Naive thymus-derived CD4-positive, alpha-beta T cell (primary cell): ENCODE measurements at regions of chr12 and their contacts with region 1.

Region 1: DNA sequence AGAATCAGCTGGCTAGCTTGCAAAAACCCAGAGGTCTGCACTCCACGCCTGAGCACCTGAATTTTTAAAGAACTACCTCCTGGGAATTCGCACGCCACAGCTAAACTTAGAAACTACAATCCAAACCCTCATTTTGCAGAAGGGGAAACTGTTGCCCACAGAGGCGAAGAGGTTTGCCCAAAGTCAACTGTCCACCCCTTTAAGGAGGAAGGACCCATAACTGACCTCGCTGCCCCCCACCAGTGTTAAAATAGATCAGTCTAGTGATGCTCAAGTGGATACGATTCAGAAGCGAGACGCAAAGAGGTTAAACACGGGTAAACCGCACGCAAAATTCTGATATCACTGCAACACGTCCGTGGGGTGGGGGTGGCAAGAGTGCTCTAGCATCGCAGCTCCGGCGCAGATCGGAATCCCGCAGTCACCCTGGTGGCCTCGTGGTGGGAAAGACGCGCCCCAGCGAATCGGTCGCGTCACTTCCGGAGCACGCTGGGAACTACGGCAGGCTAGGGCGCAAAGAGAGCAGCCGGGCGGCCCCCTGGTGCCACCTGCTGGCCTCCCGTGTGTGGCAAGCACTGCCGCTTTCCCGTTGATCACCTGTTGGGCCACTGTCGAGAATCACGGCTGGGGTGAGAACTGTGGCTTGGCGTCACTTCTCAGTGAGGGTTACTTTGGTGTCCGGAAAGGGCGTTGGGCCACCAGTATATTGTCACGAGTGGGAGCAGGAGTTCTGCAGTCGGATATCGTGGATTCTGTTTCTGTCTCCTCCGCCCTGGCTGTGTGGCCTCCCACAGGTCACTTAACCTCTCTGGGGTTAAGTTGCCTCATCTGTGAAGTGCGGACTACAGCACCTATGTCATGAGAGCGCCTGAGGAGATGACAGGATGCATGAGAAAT is at the start of gene ALKBH2:
- DNase-seq: peak; percentile 91 to 96 (median 93)
- ATAC-seq: peak; percentile 87
- H3K4me3 ChIP-seq: peak within 1 kb of the TSS; percentile 62
- H3K4me3 Mint-ChIP-seq: peak within 1 kb of the TSS; percentile 80 to 93 (median 90)
- H3K27ac ChIP-seq: peak within 1 kb of the TSS; percentile 76
- H3K27ac Mint-ChIP-seq: peak within 1 kb of the TSS; percentile 88 to 96 (median 93)
- H3K4me1 ChIP-seq: peaks cover 18% of the 10 kb centered on the region in 2 donors
- H3K4me1 Mint-ChIP-seq: peaks cover 23 to 43% (median 36%) of the 10 kb centered on the region in 7 donors
- H3K27me3 ChIP-seq: no peaks in the 10 kb centered on the region
- H3K27me3 Mint-ChIP-seq: no peaks in the 10 kb centered on the region
- total RNA-seq, gene ALKBH2: 13.2 to 21.4 (median 17.6) TPM

Region 2: DNA sequence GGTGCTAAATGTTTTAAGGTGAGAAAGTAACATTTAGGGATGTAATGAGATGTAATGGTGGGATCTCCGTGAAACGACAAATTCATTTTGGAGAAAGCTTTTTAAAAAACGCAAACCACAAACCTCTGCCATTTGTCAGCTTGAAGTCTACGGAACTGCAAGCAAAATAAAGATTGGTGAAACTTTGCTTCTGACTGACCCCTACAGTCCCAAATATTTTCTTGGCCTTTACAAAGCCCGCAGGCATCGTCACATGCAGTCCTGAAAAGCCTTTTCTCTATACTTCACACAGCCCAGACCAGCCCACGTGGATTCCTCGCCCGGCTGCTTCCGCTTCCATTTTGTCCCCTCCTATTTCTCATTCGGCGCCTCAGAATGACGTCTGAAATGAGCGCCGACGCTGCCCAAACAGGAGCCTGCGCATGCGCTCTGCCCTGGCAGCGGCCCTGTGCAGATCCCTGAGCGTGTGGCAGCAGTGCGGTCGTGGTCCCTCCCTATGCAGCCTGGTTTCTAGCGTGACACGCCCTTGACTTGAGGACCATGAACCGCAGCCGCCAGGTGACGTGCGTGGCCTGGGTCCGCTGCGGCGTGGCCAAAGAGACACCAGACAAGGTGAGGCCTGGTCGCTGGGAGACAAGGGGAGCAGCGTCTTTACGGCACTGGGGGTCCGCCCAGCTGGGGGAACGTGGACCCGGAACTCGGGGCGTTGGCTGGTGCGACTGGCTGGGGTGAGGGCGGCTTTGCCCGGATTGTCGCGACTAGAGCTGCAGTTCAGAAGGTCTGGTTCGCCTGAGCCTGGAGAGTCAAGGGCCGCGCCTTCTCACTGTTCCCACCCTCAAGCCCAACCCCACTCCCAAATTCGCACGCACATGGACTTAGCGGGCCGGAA is 1407.7 kb before region 1 on chr12 and contains the start of gene PWP1:
- CTCF ChIA-PET with region 1: no interaction called
- POLR2A ChIA-PET with region 1: no interaction called
- intact Hi-C with region 1: loop called in 1 of 2 experiments (anchors 1 kb)
- DNase-seq: peak; percentile 93 to 97 (median 95)
- ATAC-seq: peak; percentile 93
- H3K4me3 ChIP-seq: peak within 1 kb of the TSS; percentile 78
- H3K4me3 Mint-ChIP-seq: peak within 1 kb of the TSS; percentile 90 to 99 (median 95)
- H3K27ac ChIP-seq: peak within 1 kb of the TSS; percentile 88
- H3K27ac Mint-ChIP-seq: peak within 1 kb of the TSS; percentile 90 to 99 (median 97)
- H3K4me1 ChIP-seq: peaks cover 12 to 19% of the 10 kb centered on the region in 2 donors
- H3K4me1 Mint-ChIP-seq: peaks cover 23 to 40% (median 35%) of the 10 kb centered on the region in 7 donors
- H3K27me3 ChIP-seq: no peaks in the 10 kb centered on the region
- H3K27me3 Mint-ChIP-seq: peaks cover 0 to 3% (median 0%) of the 10 kb centered on the region in 5 donors
- total RNA-seq, gene PWP1: 20.9 to 42.5 (median 25.7) TPM

Region 3: DNA sequence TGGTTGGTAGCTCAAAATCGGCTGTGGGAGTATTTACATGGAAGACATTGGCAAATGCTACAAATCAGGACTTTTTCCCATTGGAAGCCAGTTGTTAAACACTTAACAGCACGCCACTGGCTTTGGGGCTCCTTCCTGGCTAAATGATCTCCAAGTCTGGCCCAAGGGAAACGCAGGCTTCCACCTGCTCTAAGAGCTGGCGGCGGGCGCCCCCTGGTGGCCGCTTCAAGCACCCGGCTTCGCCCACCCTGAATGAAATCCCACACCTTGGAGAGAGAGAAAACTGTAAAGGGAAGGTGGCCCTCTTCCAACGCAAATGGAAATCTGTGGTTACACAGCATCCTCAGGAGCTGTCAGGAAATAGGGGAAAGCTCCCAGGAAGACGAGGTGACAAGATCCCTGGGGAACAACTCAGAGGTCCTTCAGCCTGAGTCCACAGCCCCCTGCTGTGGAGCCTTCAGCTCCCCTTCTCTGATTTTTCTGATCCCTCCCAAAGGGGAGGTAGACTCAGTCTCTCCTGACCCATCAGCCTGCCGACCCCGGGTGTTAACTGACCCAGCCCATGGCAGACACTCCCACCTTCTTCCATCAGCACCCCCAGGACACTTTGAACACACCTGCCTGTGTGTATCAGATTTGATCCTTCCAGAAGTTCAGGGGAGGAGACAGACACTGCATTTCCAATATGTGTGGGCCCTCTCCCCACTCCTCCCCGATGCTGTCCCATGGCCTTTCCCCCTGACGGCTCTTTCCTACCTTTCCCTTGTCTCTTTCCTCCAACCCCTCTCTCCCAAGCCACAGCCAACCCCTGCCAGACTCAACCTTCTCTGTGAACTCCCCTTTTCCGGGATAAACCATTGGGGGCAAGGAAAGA is 475.0 kb before region 1 on chr12:
- CTCF ChIA-PET with region 1: no interaction called
- POLR2A ChIA-PET with region 1: no interaction called
- intact Hi-C with region 1: loop called in 1 of 2 experiments (anchors 5 kb)
- DNase-seq: peak; percentile 61 to 81 (median 74)
- ATAC-seq: peak; percentile 72
- H3K4me3 ChIP-seq: no peak overlapping the region
- H3K4me3 Mint-ChIP-seq: peak overlapping the region in 8 of 10 donors; percentile 13 to 54 (median 34)
- H3K27ac ChIP-seq: peak overlapping the region; percentile 65
- H3K27ac Mint-ChIP-seq: peak overlapping the region; percentile 67 to 92 (median 79)
- H3K4me1 ChIP-seq: peaks cover 34 to 42% of the 10 kb centered on the region in 2 donors
- H3K4me1 Mint-ChIP-seq: peaks cover 44 to 72% (median 64%) of the 10 kb centered on the region in 7 donors
- H3K27me3 ChIP-seq: no peaks in the 10 kb centered on the region
- H3K27me3 Mint-ChIP-seq: no peaks in the 10 kb centered on the region

Region 4: GRCh38 chr12:108731105-108731865 is 362.0 kb before region 1 on chr12 and contains the start of gene CORO1C:
- CTCF ChIA-PET with region 1: no interaction called
- POLR2A ChIA-PET with region 1: no interaction called
- intact Hi-C with region 1: loop called (anchors 2 to 5 kb)
- DNase-seq: peak; percentile 90 to 99 (median 94)
- ATAC-seq: peak; percentile 88
- H3K4me3 ChIP-seq: peak within 1 kb of the TSS; percentile 99
- H3K4me3 Mint-ChIP-seq: peak within 1 kb of the TSS; percentile 94 to 99 (median 96)
- H3K27ac ChIP-seq: peak within 1 kb of the TSS; percentile 78
- H3K27ac Mint-ChIP-seq: peak within 1 kb of the TSS; percentile 79 to 98 (median 96)
- H3K4me1 ChIP-seq: peaks cover 4 to 6% of the 10 kb centered on the region in 2 donors
- H3K4me1 Mint-ChIP-seq: peaks cover 0 to 44% (median 19%) of the 10 kb centered on the region in 7 donors
- H3K27me3 ChIP-seq: no peaks in the 10 kb centered on the region
- H3K27me3 Mint-ChIP-seq: peaks cover 0 to 9% (median 0%) of the 10 kb centered on the region in 5 donors
- total RNA-seq, gene CORO1C: 7.6 to 71.8 (median 15.7) TPM

Region 5: DNA sequence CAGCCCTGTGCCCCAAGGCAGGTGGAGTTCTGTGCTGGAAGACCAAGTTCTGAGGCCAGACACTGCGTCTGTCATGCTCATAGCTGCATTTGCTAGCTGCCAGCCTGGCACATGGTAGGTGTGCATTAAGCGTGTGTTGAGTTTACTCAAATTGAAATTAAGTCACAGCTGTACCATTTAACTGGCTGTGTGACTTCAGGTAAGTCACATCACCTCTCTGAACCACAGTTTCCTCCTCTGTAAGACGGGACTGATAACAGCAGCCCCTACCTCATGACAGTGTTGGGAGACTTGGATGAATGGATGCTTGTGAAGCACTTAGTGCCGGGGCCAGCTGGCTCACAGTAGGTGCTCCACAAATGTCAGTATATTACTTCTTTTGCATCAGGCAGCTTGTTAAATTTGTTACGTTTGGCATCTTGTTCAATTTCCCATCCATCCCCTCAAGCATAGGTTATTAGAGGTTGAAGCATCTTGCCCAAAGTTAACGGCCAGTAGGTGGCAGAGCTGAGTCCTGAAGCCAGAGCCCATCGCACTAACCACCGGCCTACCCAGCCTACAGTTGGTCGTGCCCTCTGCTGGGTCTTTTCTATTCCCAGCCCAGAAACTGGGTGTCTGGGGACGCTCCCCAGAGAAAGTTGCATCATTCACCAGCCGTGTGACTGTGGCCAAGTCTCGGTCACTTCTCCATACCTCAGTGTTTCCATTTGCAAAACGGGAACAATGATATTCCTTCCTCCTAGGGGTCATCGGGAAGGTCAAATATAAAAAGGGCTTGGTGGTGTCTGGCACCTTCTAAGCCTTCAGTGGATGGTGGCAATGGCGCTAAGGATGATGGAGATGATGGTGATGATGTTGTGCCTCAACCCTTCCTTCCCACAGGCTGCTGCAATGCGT is 208.9 kb before region 1 on chr12:
- CTCF ChIA-PET with region 1: interaction called, 10 read pairs
- POLR2A ChIA-PET with region 1: no interaction called
- intact Hi-C with region 1: loop called (anchors 1 kb)
- DNase-seq: peak; percentile 15 to 55 (median 33)
- ATAC-seq: peak; percentile 93
- H3K4me3 ChIP-seq: no peak overlapping the region
- H3K4me3 Mint-ChIP-seq: no peak overlapping the region
- H3K27ac ChIP-seq: no peak overlapping the region
- H3K27ac Mint-ChIP-seq: no peak overlapping the region
- H3K4me1 ChIP-seq: no peaks in the 10 kb centered on the region
- H3K4me1 Mint-ChIP-seq: peaks cover 0 to 6% (median 0%) of the 10 kb centered on the region in 7 donors
- H3K27me3 ChIP-seq: no peaks in the 10 kb centered on the region
- H3K27me3 Mint-ChIP-seq: no peaks in the 10 kb centered on the region

Region 6: DNA sequence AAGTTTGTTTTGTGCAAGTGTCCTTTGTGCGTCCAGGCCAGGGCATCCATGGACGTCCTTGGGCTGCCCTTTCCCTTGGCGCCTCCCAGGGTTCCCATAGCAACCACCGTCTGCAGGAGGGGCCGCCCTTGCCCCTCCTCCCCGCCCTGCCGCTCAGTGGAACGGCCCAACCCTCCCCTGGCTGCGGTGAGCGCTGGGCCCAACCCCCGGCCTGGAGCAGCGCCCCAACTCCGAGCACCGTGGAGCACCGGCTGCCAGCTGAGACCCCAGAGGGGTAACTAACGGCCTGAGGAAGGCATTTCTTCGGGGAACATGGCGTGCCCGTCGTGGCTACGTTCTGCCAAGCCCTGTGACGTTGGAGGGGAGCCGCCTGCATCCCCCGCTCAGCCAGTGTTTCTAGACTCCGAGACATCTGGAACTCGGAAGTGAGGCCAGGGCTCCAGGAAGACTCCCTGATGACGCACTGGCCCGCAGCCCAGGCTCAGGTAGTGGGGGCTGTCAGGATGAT is 17.8 kb after region 1 on chr12:
- CTCF ChIA-PET with region 1: interaction called, 5 read pairs
- POLR2A ChIA-PET with region 1: interaction called, 8 read pairs
- intact Hi-C with region 1: loop called (anchors 1 kb)
- DNase-seq: peak; percentile 24 to 62 (median 48)
- ATAC-seq: peak; percentile 89
- H3K4me3 ChIP-seq: peak overlapping the region; percentile 46
- H3K4me3 Mint-ChIP-seq: peak overlapping the region; percentile 79 to 88 (median 84)
- H3K27ac ChIP-seq: peak overlapping the region; percentile 80
- H3K27ac Mint-ChIP-seq: peak overlapping the region; percentile 61 to 92 (median 77)
- H3K4me1 ChIP-seq: peaks cover 0 to 5% of the 10 kb centered on the region in 2 donors
- H3K4me1 Mint-ChIP-seq: peaks cover 5 to 46% (median 39%) of the 10 kb centered on the region in 7 donors
- H3K27me3 ChIP-seq: no peaks in the 10 kb centered on the region
- H3K27me3 Mint-ChIP-seq: no peaks in the 10 kb centered on the region

Region 7: GRCh38 chr12:109134186-109134917 is 41.1 kb after region 1 on chr12:
- CTCF ChIA-PET with region 1: no interaction called
- POLR2A ChIA-PET with region 1: no interaction called
- intact Hi-C with region 1: no loop called
- DNase-seq: no peak
- ATAC-seq: no peak
- H3K4me3 ChIP-seq: no peak overlapping the region
- H3K4me3 Mint-ChIP-seq: no peak overlapping the region
- H3K27ac ChIP-seq: no peak overlapping the region
- H3K27ac Mint-ChIP-seq: no peak overlapping the region
- H3K4me1 ChIP-seq: no peaks in the 10 kb centered on the region
- H3K4me1 Mint-ChIP-seq: peaks cover 0 to 3% (median 0%) of the 10 kb centered on the region in 7 donors
- H3K27me3 ChIP-seq: no peaks in the 10 kb centered on the region
- H3K27me3 Mint-ChIP-seq: peaks cover 0 to 7% (median 4%) of the 10 kb centered on the region in 5 donors

Region 8: DNA sequence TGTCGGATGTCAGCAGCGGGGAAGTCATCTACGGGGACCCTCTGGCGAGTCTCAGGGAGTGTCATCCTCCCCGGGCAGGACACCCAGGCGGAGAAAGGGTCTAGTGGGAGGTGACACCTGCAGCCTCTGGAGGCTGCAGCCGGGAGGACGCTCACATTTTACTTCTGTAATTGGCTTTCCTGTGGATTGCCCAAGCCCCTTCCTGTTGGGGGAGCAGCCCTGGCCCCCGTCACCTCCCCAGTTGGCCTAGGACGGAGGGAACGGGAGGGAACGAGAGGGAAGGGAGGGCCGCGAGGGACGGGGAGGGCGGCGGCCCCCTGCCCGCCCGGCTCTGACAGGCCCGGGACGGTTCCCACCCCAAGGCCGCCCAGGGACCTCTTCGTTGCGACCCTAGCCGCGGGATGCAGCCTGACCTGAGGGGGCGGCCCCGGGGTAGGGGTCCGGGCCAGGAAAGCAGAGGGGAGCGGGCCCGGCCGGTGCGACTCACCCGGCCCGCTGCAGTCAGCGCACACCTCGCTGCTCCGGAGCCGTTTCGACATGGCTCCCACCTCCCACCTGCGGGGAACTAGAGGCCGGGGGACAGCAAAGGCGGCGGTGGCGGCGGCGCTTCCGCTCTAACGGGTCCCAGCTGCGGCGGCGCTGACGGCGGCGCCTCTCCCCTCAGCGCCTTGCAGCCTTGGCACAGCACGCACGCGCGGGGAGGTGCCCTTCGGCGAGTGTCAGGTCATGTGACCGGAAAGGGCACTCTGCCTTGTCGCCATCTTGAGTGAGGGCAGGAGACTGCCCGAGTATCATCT is 902.6 kb after region 1 on chr12 and contains the start of gene GIT2:
- CTCF ChIA-PET with region 1: no interaction called
- POLR2A ChIA-PET with region 1: no interaction called
- intact Hi-C with region 1: loop called in 1 of 2 experiments (anchors 5 kb)
- DNase-seq: peak; percentile 88 to 95 (median 93)
- ATAC-seq: peak; percentile 81
- H3K4me3 ChIP-seq: peak within 1 kb of the TSS; percentile 86
- H3K4me3 Mint-ChIP-seq: peak within 1 kb of the TSS; percentile 90 to 100 (median 96)
- H3K27ac ChIP-seq: peak within 1 kb of the TSS; percentile 84
- H3K27ac Mint-ChIP-seq: peak within 1 kb of the TSS; percentile 84 to 100 (median 96)
- H3K4me1 ChIP-seq: peaks cover 22 to 33% of the 10 kb centered on the region in 2 donors
- H3K4me1 Mint-ChIP-seq: peaks cover 42 to 77% (median 66%) of the 10 kb centered on the region in 7 donors
- H3K27me3 ChIP-seq: no peaks in the 10 kb centered on the region
- H3K27me3 Mint-ChIP-seq: no peaks in the 10 kb centered on the region
- total RNA-seq, gene GIT2: 70.3 to 128 (median 109) TPM